Activated CD4-positive, alpha-beta memory T cell treated with anti-CD3 and anti-CD28 coated beads for 36 hours (primary cell): ENCODE measurements at regions of chr1 and their contacts with region 1.

Region 1: GRCh38 chr1:192808518-192809306 is at the start of gene RGS2:
- DNase-seq: peak; percentile 91
- H3K4me3 Mint-ChIP-seq: peak within 1 kb of the TSS; percentile 83
- H3K27ac Mint-ChIP-seq: peak within 1 kb of the TSS; percentile 77
- H3K4me1 Mint-ChIP-seq: peaks cover 32% of the 10 kb centered on the region
- H3K27me3 Mint-ChIP-seq: no peaks in the 10 kb centered on the region
- total RNA-seq, gene RGS2: 5.4 to 6.4 TPM

Region 2: GRCh38 chr1:192516776-192517297 is 291.9 kb before region 1 on chr1:
- CTCF ChIA-PET with region 1: no interaction called
- POLR2A ChIA-PET with region 1: interaction called, 3 read pairs
- intact Hi-C with region 1: loop called (anchors 1 kb)
- DNase-seq: peak; percentile 71
- H3K4me3 Mint-ChIP-seq: peak overlapping the region; percentile 53
- H3K27ac Mint-ChIP-seq: peak overlapping the region; percentile 82
- H3K4me1 Mint-ChIP-seq: peaks cover 56% of the 10 kb centered on the region
- H3K27me3 Mint-ChIP-seq: no peaks in the 10 kb centered on the region

Region 3: GRCh38 chr1:192580351-192580962 is 228.3 kb before region 1 on chr1:
- CTCF ChIA-PET with region 1: interaction called, 3 read pairs
- POLR2A ChIA-PET with region 1: no interaction called
- intact Hi-C with region 1: loop called (anchors 10 kb)
- DNase-seq: no peak
- H3K4me3 Mint-ChIP-seq: peak overlapping the region; percentile 24
- H3K27ac Mint-ChIP-seq: peak overlapping the region; percentile 26
- H3K4me1 Mint-ChIP-seq: peaks cover 46% of the 10 kb centered on the region
- H3K27me3 Mint-ChIP-seq: no peaks in the 10 kb centered on the region

Region 4: DNA sequence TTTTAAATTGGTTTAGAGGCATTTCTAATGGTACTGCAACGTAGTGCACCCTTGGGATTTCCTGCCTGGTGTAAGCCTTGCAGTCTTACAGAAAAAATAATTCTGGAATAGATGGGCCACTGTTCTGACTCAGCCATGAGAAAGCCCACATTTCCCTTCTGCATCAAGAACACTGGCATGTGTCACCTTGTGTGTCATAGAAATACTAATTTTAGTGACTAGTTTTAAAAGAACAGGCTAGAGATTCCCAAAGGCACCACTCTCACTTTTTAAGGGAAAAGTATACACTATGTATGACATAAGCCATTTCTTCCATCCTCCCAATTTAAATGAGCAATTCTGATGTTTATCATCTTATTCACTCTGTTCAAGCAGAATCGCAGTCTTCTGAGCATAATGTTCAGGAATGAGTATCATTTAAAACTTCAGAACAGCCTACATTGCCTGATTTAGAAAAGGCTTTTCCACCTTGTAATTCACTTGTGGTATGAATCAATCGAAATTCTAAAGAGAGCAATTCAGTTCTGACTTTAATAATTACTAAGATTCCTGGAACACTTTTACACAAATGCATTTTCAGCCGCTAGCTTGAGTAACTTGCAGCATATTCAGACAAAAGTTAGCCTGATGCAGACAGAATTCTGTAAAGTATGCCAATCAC is 154.0 kb before region 1 on chr1:
- CTCF ChIA-PET with region 1: no interaction called
- POLR2A ChIA-PET with region 1: no interaction called
- intact Hi-C with region 1: loop called (anchors 1 kb)
- DNase-seq: peak; percentile 33
- H3K4me3 Mint-ChIP-seq: no peak overlapping the region
- H3K27ac Mint-ChIP-seq: peak overlapping the region; percentile 43
- H3K4me1 Mint-ChIP-seq: peaks cover 13% of the 10 kb centered on the region
- H3K27me3 Mint-ChIP-seq: peaks cover 14% of the 10 kb centered on the region

Region 5: GRCh38 chr1:192983349-192983980 is 174.8 kb after region 1 on chr1:
- CTCF ChIA-PET with region 1: interaction called, 8 read pairs
- POLR2A ChIA-PET with region 1: interaction called, 3 read pairs
- intact Hi-C with region 1: loop called (anchors 1 kb)
- DNase-seq: peak; percentile 68
- H3K4me3 Mint-ChIP-seq: no peak overlapping the region
- H3K27ac Mint-ChIP-seq: peak overlapping the region; percentile 82
- H3K4me1 Mint-ChIP-seq: peaks cover 45% of the 10 kb centered on the region
- H3K27me3 Mint-ChIP-seq: no peaks in the 10 kb centered on the region

Region 6: GRCh38 chr1:193121616-193122593 is 313.2 kb after region 1 on chr1 and contains the start of gene CDC73:
- CTCF ChIA-PET with region 1: interaction called, 8 read pairs
- POLR2A ChIA-PET with region 1: interaction called, 5 read pairs
- intact Hi-C with region 1: loop called (anchors 1 kb)
- DNase-seq: peak; percentile 99
- H3K4me3 Mint-ChIP-seq: peak within 1 kb of the TSS; percentile 85
- H3K27ac Mint-ChIP-seq: peak within 1 kb of the TSS; percentile 98
- H3K4me1 Mint-ChIP-seq: peaks cover 45% of the 10 kb centered on the region
- H3K27me3 Mint-ChIP-seq: no peaks in the 10 kb centered on the region
- total RNA-seq, gene CDC73: 47.9 to 49.3 TPM

Region 7: GRCh38 chr1:194295685-194296084 is 1487.0 kb after region 1 on chr1:
- CTCF ChIA-PET with region 1: no interaction called
- POLR2A ChIA-PET with region 1: no interaction called
- intact Hi-C with region 1: loop called (anchors 2 kb)
- DNase-seq: no peak
- H3K4me3 Mint-ChIP-seq: no peak overlapping the region
- H3K27ac Mint-ChIP-seq: no peak overlapping the region
- H3K4me1 Mint-ChIP-seq: peaks cover 49% of the 10 kb centered on the region
- H3K27me3 Mint-ChIP-seq: no peaks in the 10 kb centered on the region